HepG2 (cell line): ENCODE measurements at regions of chr7 and their contacts with region 1.

Region 1: DNA sequence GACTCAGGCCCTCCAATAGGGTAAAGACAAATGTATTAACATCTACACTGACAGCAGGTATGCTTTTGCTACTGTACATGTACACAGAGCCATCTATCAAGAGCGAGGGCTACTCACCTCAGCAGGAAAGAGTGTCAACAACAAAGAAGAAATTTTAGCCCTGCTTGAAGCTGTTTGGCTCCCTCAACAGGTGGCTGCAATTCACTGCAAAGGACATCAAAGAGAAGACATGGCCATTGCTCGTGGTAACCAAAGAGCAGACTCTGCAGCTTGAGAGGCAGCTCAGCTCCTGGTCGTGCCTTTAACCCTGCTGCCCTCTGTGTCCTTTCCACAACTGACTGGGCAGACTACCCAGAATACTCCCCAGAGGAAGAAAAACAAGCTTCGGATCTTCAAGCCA is 5.1 kb downstream of the AKR1B15 start:
- DNase-seq: peak; percentile 37
- ATAC-seq: peak; percentile 75
- H3K4me3 ChIP-seq: no peak overlapping the region
- H3K27ac ChIP-seq: no peak overlapping the region
- H3K4me1 ChIP-seq: peaks cover 13% of the 10 kb centered on the region
- H3K27me3 ChIP-seq: peaks cover 4 to 66% of the 10 kb centered on the region in 2 experiments; a peak in 4 of 5 replicates
- CTCF ChIP-seq: peak; percentile 67
- EP300 ChIP-seq: no peak
- POLR2A ChIP-seq: no peak
- RAD21 ChIP-seq: no peak

Region 2: DNA sequence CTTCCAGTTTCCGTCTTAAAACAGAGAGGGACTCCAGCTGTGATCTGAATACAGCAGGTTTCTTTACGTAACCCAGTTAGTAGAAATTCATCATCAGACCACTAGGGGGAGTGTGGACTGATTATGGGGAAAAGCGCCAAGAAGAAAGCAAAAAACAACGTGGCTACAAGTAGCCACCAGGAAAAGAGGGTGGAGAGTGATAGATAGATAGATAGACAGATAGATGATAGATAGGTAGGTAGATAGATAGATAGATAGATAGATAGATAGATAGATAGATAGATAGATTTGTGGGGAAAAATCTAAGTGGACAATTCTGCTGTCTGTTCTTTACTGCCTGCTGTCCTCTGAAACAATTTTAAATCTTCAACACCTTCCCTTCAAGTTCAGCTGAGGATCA is 39.3 kb before region 1 on chr7:
- CTCF ChIA-PET with region 1: interaction called, 4 read pairs
- POLR2A ChIA-PET with region 1: no interaction called
- in situ Hi-C with region 1: no loop called
- intact Hi-C with region 1: loop called (anchors 2 kb)
- DNase-seq: peak; percentile 66
- ATAC-seq: peak; percentile 73
- H3K4me3 ChIP-seq: no peak overlapping the region
- H3K27ac ChIP-seq: no peak overlapping the region
- H3K4me1 ChIP-seq: no peaks in the 10 kb centered on the region
- H3K27me3 ChIP-seq: peaks cover 2 to 5% of the 10 kb centered on the region in 2 experiments; a peak in 3 of 5 replicates
- CTCF ChIP-seq: peak; percentile 72
- EP300 ChIP-seq: no peak
- POLR2A ChIP-seq: no peak
- RAD21 ChIP-seq: no peak

Region 3: GRCh38 chr7:134520130-134520529 is 33.8 kb before region 1 on chr7:
- CTCF ChIA-PET with region 1: no interaction called
- POLR2A ChIA-PET with region 1: no interaction called
- in situ Hi-C with region 1: no loop called
- intact Hi-C with region 1: loop called (anchors 1 kb)
- DNase-seq: no peak
- ATAC-seq: peak; percentile 40; the same call in 1 of the 3 replicates
- H3K4me3 ChIP-seq: no peak overlapping the region; a peak in 1 of 6 replicates
- H3K27ac ChIP-seq: no peak overlapping the region
- H3K4me1 ChIP-seq: no peaks in the 10 kb centered on the region
- H3K27me3 ChIP-seq: peaks cover 0 to 5% of the 10 kb centered on the region in 2 experiments; a peak in 2 of 5 replicates
- CTCF ChIP-seq: no peak
- EP300 ChIP-seq: no peak
- POLR2A ChIP-seq: no peak
- RAD21 ChIP-seq: no peak